Ovary (tissue), 10 donors: ENCODE measurements at regions of chr5 and their contacts with region 1.

Region 1: GRCh38 chr5:38193015-38193581 is 65.3 kb upstream of the EGFLAM start:
- DNase-seq: peak; percentile 64 to 82 (median 80)
- H3K4me3 ChIP-seq: no peak overlapping the region
- H3K27ac ChIP-seq: no peak overlapping the region
- H3K4me1 ChIP-seq: no peaks in the 10 kb centered on the region
- H3K27me3 ChIP-seq: no peaks in the 10 kb centered on the region
- CTCF ChIP-seq: peak; percentile 47 to 86 (median 68)
- EP300 ChIP-seq: no peak
- POLR2A ChIP-seq: no peak

Region 2: GRCh38 chr5:36630201-36631145 is 1562.6 kb before region 1 on chr5:
- intact Hi-C with region 1: no loop called
- DNase-seq: no peak
- H3K4me3 ChIP-seq: no peak overlapping the region
- H3K27ac ChIP-seq: no peak overlapping the region
- H3K4me1 ChIP-seq: no peaks in the 10 kb centered on the region
- H3K27me3 ChIP-seq: no peaks in the 10 kb centered on the region
- CTCF ChIP-seq: no peak
- EP300 ChIP-seq: no peak
- POLR2A ChIP-seq: no peak

Region 3: GRCh38 chr5:37837414-37838032 is 355.6 kb before region 1 on chr5:
- intact Hi-C with region 1: loop called (anchors 2 to 5 kb)
- DNase-seq: peak; percentile 79 to 92 (median 83)
- H3K4me3 ChIP-seq: peak overlapping the region; percentile 39
- H3K27ac ChIP-seq: peak overlapping the region in 1 of 2 donors; percentile 17
- H3K4me1 ChIP-seq: peaks cover 1% of the 10 kb centered on the region
- H3K27me3 ChIP-seq: no peaks in the 10 kb centered on the region
- CTCF ChIP-seq: peak; percentile 61 to 86 (median 77)
- EP300 ChIP-seq: no peak
- POLR2A ChIP-seq: no peak

Region 4: DNA sequence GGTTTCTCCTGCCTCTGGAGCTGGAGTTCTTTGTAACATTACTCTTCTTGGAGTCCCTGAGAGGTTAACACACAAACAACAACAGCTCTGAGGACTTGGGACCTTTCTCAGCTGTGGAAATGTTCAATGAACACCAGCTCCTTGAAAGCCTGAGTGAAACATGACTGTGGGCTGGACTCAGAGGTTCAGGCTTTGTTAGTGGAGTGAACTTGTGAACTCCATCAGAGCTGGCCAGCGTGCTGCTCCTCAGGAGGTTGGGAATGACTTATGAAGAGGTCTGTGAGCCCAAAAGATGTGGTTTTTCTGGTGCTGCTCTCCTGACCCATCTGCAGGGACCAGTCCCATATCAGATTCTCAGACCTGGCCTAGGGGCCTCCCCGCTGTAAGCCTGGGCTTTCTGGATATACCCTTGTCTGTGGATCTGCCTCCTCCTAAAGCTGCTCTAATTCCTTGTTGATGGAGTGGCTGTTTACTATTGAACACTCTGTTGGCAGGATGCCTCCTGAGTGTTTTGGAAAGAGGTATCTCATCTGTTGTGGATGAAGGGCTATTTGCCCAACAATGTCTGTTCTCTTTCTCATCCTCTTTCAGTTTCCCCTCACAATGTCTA is 183.2 kb before region 1 on chr5:
- intact Hi-C with region 1: loop called in 1 of 4 experiments (anchors 10 kb)
- DNase-seq: peak in 3 of 5 donors; percentile 19 to 21 (median 20)
- H3K4me3 ChIP-seq: no peak overlapping the region
- H3K27ac ChIP-seq: no peak overlapping the region
- H3K4me1 ChIP-seq: no peaks in the 10 kb centered on the region
- H3K27me3 ChIP-seq: no peaks in the 10 kb centered on the region
- CTCF ChIP-seq: no peak
- EP300 ChIP-seq: no peak
- POLR2A ChIP-seq: no peak

Region 5: DNA sequence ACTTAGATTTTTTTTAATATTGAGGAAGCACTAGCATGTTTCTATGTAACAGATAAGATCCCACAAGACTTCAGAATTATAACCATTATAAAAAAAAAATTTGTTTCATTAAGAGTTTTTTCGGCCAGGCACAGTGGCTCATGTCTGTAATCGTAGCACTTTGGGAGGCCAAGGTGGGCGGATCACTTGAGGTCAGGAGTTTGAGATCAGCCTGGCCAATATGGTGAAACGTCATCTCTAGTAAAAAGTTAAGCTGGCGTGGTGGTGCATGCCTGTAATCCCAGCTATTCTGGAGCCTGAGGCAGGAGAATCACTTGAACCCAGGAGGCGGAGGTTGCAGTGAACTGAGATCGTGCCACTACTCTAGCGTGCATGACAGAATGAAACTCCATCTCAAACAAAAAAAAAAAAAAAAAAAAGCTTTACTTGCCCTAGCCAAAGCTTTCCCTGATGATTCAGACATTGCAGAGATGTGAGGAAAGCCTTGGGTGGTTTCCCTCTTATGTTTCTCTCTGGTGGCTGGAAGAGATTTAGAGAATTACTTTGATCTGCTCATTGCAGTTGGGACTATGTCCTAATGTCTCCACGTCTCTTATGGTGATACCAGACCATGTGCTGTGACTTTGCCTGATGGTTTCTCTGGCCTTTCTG is 130.7 kb after region 1 on chr5:
- intact Hi-C with region 1: no loop called
- DNase-seq: no peak
- H3K4me3 ChIP-seq: no peak overlapping the region
- H3K27ac ChIP-seq: no peak overlapping the region
- H3K4me1 ChIP-seq: no peaks in the 10 kb centered on the region
- H3K27me3 ChIP-seq: no peaks in the 10 kb centered on the region
- CTCF ChIP-seq: no peak
- EP300 ChIP-seq: no peak
- POLR2A ChIP-seq: no peak